ENCODE measurements at regions of chr3 and their contacts with region 1.

Region 1: GRCh38 chr3:134600685-134601463 is 49.9 kb downstream of the KY start:
- DNase-seq: peak; percentile 38
- H3K4me3 ChIP-seq: no peak overlapping the region
- H3K27ac ChIP-seq: no peak overlapping the region
- H3K4me1 ChIP-seq: peaks cover 19% of the 10 kb centered on the region
- H3K27me3 ChIP-seq: no peaks in the 10 kb centered on the region
- CTCF ChIP-seq: peak; percentile 94 to 98

Region 2: DNA sequence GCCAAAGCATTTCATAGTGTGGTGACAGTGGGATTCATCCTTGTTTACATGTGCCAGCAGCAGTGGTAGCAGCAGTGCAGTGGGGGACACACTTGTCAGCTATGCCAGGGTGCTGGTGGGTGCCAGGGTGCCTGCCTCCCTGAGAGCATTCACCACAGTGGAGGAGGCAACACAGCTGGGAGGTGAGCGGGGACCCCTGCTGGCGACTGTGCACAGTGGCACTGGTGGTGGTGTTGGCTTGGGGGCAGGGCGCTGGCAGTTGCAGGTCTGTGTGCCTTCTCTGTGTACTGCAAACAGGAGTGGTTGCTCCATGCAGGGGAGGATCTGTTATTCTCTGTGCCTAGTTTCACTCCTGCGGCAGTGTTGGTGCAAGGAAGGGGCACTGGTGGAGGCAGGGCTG is 73.8 kb before region 1 on chr3:
- CTCF ChIA-PET with region 1: no interaction called
- dilution Hi-C with region 1: no loop called
- in situ Hi-C with region 1: no loop called
- intact Hi-C with region 1: no loop called
- DNase-seq: peak; percentile 4
- H3K4me3 ChIP-seq: no peak overlapping the region
- H3K27ac ChIP-seq: no peak overlapping the region
- H3K4me1 ChIP-seq: no peaks in the 10 kb centered on the region
- H3K27me3 ChIP-seq: no peaks in the 10 kb centered on the region
- CTCF ChIP-seq: peak in 1 of 2 donors; percentile 27

Region 3: GRCh38 chr3:134618478-134619300 is 17.8 kb after region 1 on chr3:
- CTCF ChIA-PET with region 1: interaction called, 20 read pairs
- dilution Hi-C with region 1: no loop called
- in situ Hi-C with region 1: no loop called
- intact Hi-C with region 1: no loop called
- DNase-seq: no peak
- H3K4me3 ChIP-seq: no peak overlapping the region
- H3K27ac ChIP-seq: no peak overlapping the region
- H3K4me1 ChIP-seq: no peaks in the 10 kb centered on the region
- H3K27me3 ChIP-seq: no peaks in the 10 kb centered on the region
- CTCF ChIP-seq: no peak

Region 4: DNA sequence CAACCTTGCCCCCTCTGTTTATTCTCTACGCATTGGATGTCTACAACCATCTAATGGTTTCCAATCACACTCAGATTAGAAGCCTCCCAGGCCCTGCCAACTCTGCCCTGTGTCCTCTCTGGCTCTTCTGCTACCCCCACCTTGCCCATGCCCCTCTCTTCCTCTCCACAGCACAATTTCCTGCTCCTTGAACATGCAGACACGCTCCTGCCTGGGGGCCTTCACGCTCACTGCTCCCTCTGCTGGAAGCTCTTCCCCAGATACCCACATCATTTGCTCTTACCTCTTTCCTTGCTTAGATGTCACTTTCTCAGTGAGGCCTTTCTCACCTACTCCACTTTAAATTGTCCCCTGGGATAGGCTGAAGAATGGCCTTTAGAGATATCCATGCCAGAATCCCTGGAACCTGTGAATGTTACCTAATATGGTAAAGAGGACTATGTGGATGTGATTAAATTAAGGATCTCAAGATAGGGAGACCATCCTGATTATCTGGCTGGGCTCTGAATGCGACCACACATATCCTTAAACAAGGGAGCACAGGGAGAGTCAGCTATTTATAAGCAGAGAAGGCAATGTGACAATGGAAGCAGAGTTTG is 40.1 kb after region 1 on chr3:
- CTCF ChIA-PET with region 1: no interaction called
- dilution Hi-C with region 1: no loop called
- in situ Hi-C with region 1: no loop called
- intact Hi-C with region 1: loop called (anchors 1 kb)
- DNase-seq: no peak
- H3K4me3 ChIP-seq: no peak overlapping the region
- H3K27ac ChIP-seq: no peak overlapping the region
- H3K4me1 ChIP-seq: no peaks in the 10 kb centered on the region
- H3K27me3 ChIP-seq: no peaks in the 10 kb centered on the region
- CTCF ChIP-seq: peak; percentile 38 to 56

Region 5: GRCh38 chr3:134754768-134755559 is 154.1 kb after region 1 on chr3:
- CTCF ChIA-PET with region 1: interaction called, 5 read pairs
- dilution Hi-C with region 1: no loop called
- in situ Hi-C with region 1: loop called in 1 of 2 experiments (anchors 10 kb)
- intact Hi-C with region 1: loop called (anchors 1 kb)
- DNase-seq: peak; percentile 40
- H3K4me3 ChIP-seq: no peak overlapping the region
- H3K27ac ChIP-seq: no peak overlapping the region
- H3K4me1 ChIP-seq: no peaks in the 10 kb centered on the region
- H3K27me3 ChIP-seq: no peaks in the 10 kb centered on the region
- CTCF ChIP-seq: peak; percentile 80 to 87

Region 6: DNA sequence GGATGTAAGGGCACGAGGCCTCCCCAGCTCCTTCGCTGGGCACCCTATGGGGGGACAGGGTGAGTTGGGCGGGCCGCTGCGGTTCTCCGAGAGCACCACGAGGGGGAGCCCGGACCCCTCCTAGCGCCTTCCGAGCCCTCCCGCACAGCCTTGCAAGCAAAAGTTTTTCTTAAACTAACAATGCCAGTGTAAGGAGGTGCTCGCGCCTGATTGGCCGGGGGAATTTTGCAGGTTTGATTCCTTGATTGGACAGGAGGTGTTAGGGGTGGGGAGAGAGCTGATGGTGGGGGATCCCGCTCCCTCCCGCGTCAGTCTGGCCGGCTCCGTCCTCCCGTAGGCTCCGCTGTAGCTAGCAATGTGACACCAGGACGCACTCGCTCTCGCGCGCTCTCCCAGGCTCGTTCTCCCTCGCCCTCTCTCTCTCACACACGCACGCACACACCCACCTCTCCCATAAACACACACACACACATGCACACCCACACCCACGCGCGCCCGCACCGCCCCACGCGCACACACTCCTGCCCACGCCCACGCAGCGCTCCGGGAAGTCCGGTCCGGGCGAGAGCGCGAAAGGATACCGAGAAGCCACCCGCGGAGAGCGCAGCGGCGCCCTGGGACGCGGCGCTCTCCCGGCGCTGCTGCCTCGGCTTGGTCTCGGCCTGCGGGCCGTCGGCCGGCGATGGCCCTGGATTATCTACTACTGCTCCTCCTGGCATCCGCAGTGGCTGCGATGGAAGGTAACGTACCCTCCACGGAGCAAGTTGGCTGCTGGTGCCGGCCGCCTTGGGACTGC is 194.3 kb after region 1 on chr3 and contains the start of gene EPHB1:
- CTCF ChIA-PET with region 1: no interaction called
- dilution Hi-C with region 1: no loop called
- in situ Hi-C with region 1: no loop called
- intact Hi-C with region 1: loop called (anchors 2 kb)
- DNase-seq: peak; percentile 82
- H3K4me3 ChIP-seq: peak within 1 kb of the TSS; percentile 42 to 55 (median 44)
- H3K27ac ChIP-seq: no peak within 1 kb of the TSS
- H3K4me1 ChIP-seq: peaks cover 12% of the 10 kb centered on the region
- H3K27me3 ChIP-seq: peaks cover 25% of the 10 kb centered on the region
- CTCF ChIP-seq: peak; percentile 68 to 77
- total RNA-seq, gene EPHB1: 0.24 TPM in 1 of 2 donors, not detected in the other

Region 7: DNA sequence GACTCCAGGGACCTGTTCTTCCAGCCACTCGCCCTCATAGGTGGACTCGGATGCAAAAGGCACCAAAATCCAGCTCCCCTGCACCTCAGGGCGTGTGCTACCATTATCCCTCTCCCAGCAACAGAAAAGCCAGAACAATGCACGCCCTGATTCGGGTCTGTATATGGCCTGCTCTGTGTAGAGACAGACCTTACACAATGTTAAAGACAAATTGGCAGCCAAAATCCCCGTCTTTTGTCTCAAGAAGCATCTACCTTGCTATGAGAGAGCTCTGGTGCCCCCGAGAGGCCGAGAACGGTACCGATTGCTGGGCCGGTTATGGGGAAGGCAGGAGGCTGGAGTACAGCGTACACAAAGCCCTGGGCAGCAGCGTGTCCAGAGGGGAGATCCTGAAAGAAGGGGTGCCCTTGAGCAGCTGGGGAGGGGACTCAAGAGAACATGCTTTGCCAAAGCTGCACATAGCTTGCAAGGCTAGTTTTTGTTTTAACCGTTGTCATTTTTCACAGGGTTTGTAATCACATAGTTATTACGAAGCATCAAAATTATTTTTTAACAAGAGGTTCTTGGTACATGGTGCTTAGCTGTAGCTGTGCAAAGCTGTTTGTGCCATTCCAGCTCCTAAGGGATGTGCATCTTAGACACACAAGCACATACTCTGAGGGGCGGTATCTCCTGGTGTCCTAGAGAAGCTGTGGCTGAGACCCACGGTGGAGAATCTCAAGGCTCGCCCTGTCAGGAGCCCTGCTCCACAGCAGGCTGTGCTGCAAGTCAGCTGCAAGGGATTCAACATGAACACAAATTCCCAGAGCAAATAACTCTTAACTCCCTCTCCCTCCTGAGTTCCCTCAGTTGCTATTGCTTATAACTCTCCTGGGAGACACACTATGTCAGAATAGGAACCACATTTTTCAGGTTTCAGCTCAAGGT is 903.1 kb after region 1 on chr3:
- CTCF ChIA-PET with region 1: no interaction called
- dilution Hi-C with region 1: no loop called
- in situ Hi-C with region 1: loop called in 1 of 2 experiments (anchors 25 kb)
- intact Hi-C with region 1: loop called (anchors 1 kb)
- DNase-seq: peak; percentile 40
- H3K4me3 ChIP-seq: no peak overlapping the region
- H3K27ac ChIP-seq: no peak overlapping the region
- H3K4me1 ChIP-seq: no peaks in the 10 kb centered on the region
- H3K27me3 ChIP-seq: no peaks in the 10 kb centered on the region
- CTCF ChIP-seq: peak; percentile 77 to 79

Region 8: GRCh38 chr3:135895106-135895733 is 1294.3 kb after region 1 on chr3:
- CTCF ChIA-PET with region 1: no interaction called
- dilution Hi-C with region 1: no loop called
- in situ Hi-C with region 1: loop called (anchors 25 kb)
- intact Hi-C with region 1: loop called (anchors 1 kb)
- DNase-seq: peak; percentile 73
- H3K4me3 ChIP-seq: no peak overlapping the region
- H3K27ac ChIP-seq: peak overlapping the region; percentile 1
- H3K4me1 ChIP-seq: peaks cover 18% of the 10 kb centered on the region
- H3K27me3 ChIP-seq: no peaks in the 10 kb centered on the region
- CTCF ChIP-seq: peak; percentile 90 to 95

Measured in mammary epithelial cell (primary cell).